Activated CD4-positive, alpha-beta T cell treated with anti-CD3 and anti-CD28 coated beads for 36 hours (primary cell): ENCODE measurements at regions of chrX and their contacts with region 1.

Region 1: GRCh38 chrX:136147315-136147901 is at the start of gene FHL1:
- DNase-seq: peak; percentile 69
- ATAC-seq: peak; percentile 63
- H3K4me3 Mint-ChIP-seq: peak within 1 kb of the TSS; percentile 80
- H3K27ac Mint-ChIP-seq: peak within 1 kb of the TSS; percentile 74
- H3K4me1 Mint-ChIP-seq: peaks cover 32% of the 10 kb centered on the region
- H3K27me3 Mint-ChIP-seq: no peaks in the 10 kb centered on the region
- total RNA-seq, gene FHL1: 19.3 to 19.8 TPM

Region 2: GRCh38 chrX:135985141-135985972 is 162.1 kb before region 1 on chrX and contains the start of gene SLC9A6:
- CTCF ChIA-PET with region 1: no interaction called
- POLR2A ChIA-PET with region 1: no interaction called
- intact Hi-C with region 1: loop called in 1 of 2 experiments (anchors 2 kb)
- DNase-seq: peak; percentile 81
- ATAC-seq: peak; percentile 82
- H3K4me3 Mint-ChIP-seq: peak within 1 kb of the TSS; percentile 88
- H3K27ac Mint-ChIP-seq: peak within 1 kb of the TSS; percentile 90
- H3K4me1 Mint-ChIP-seq: peaks cover 51% of the 10 kb centered on the region
- H3K27me3 Mint-ChIP-seq: no peaks in the 10 kb centered on the region
- total RNA-seq, gene SLC9A6: 11.8 to 12.6 TPM

Region 3: DNA sequence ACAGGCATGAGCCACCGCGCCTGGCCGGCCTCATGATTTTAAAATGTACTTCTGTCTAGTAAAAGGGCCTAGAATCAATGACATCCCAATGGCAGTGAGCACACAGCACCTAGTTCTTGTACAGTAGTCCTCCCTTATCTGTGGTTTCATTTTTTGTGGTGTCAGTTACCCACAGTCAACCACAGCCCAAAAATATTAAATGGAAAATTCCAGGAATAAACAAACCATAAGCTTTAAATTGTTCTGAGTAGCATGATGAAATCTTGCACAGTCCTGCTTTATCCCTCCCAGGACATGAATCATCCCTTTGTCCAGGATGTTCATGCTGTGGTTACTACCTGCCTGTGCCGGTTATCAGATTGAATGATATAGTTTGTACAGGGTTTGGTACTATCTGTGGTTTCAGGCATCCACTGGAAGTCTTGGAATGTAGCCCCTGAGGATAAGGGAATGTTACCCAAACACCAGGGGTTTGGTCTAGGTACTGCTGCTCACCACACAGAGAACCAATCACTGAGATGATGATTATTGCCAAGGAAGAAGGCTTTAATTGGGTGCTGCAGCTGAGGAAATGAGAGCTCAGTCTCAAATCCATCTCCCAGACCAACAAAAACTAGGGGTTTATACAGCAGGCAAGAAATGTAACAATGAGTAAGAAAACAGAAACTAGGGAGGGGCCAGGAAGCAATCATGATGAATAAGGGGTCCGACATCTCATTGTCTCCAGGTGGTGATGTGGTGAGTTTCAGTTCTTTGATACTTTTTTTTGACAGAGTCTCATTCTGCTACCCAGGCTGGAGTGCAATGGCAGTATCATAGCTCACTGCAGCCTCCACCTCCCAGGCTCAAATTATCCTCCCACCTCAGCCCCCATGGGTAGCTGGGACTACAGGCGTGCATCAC is 16.2 kb before region 1 on chrX:
- CTCF ChIA-PET with region 1: no interaction called
- POLR2A ChIA-PET with region 1: no interaction called
- intact Hi-C with region 1: loop called in 1 of 2 experiments (anchors 2 kb)
- DNase-seq: peak; percentile 27
- ATAC-seq: peak; percentile 90
- H3K4me3 Mint-ChIP-seq: no peak overlapping the region
- H3K27ac Mint-ChIP-seq: peak overlapping the region; percentile 63
- H3K4me1 Mint-ChIP-seq: peaks cover 12% of the 10 kb centered on the region
- H3K27me3 Mint-ChIP-seq: no peaks in the 10 kb centered on the region

Region 4: DNA sequence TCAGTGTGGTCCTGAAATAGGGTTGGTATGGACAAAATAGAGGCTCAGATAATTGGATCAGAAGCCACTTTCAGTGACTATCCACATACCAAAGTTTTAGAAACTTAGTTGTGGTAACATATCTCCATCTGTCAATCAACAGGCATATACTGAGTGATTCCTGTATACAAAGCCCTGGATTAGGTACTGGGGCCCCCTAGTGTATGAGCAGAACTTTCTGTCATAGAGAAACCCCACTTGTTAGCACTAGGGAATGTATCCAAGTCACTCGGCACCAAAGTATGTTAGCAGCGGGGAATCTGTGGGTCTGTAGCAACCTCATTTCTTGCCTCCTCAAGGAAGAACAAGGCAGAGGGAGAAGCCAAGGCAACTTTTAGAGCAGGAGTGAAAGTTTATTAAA is 53.1 kb after region 1 on chrX:
- CTCF ChIA-PET with region 1: no interaction called
- POLR2A ChIA-PET with region 1: no interaction called
- intact Hi-C with region 1: loop called in 1 of 2 experiments (anchors 2 kb)
- DNase-seq: peak; percentile 22
- ATAC-seq: no peak
- H3K4me3 Mint-ChIP-seq: no peak overlapping the region
- H3K27ac Mint-ChIP-seq: no peak overlapping the region
- H3K4me1 Mint-ChIP-seq: peaks cover 26% of the 10 kb centered on the region
- H3K27me3 Mint-ChIP-seq: no peaks in the 10 kb centered on the region

Region 5: DNA sequence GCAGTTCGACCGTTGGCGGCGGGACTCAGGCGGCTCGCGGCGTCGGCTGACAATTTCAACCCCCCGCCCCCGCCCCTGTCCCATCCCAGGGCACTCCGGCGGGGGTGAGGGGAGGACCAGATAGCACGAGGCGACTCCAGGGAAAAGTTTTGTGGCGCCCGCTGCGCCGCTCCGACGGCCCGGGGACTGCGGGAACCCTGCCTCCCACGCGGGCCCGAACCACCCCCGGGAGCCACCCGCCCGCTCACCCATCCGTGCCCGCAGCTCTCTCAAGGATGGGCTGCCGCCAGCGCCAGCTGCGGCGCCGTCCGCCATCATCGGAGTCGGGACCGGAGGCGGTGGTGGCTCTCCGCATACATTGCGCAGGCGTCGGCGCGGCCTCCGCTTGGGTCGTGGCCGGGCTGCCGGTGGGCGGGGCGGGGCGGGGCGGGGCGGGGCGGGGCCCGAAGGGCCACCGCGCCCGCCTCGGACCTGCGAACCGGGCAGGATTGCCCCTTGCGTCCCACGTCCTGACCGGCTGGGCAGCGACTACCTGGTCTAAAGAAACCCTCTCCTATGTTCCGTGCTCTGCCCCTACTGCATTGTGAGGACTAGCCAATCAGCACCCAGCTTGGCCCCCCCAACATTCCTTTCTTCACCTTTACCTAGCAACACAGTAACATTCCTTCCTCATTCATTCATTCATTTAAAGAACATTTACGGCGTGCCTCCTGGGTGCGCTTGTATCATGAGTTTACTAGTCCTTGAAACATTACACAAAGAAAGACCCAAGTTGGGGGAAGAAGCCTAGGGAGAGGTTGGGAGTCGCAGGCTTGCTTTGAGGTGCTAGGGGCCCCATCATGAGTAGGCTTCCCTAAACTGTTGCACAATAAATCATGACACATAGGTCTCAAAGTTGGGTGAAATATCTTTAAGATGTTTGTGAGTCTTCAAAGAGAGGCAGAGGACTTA is 103.9 kb after region 1 on chrX and contains the start of gene MAP7D3:
- CTCF ChIA-PET with region 1: no interaction called
- POLR2A ChIA-PET with region 1: no interaction called
- intact Hi-C with region 1: loop called in 1 of 2 experiments (anchors 1 kb)
- DNase-seq: peak; percentile 80
- ATAC-seq: peak; percentile 91
- H3K4me3 Mint-ChIP-seq: peak within 1 kb of the TSS; percentile 81
- H3K27ac Mint-ChIP-seq: peak within 1 kb of the TSS; percentile 80
- H3K4me1 Mint-ChIP-seq: peaks cover 8% of the 10 kb centered on the region
- H3K27me3 Mint-ChIP-seq: no peaks in the 10 kb centered on the region
- total RNA-seq, gene MAP7D3: 16.8 to 22.7 TPM